AG04450 (cell line): ENCODE measurements at regions of chr2 and their contacts with region 1.

Region 1: GRCh38 chr2:120312861-120313694 is 32.9 kb upstream of the INHBB start:
- DNase-seq: peak; percentile 49
- H3K4me3 ChIP-seq: peak overlapping the region; percentile 63
- H3K27ac ChIP-seq: peak overlapping the region; percentile 68
- H3K27me3 ChIP-seq: peaks cover 2% of the 10 kb centered on the region
- CTCF ChIP-seq: peak; percentile 98

Region 2: DNA sequence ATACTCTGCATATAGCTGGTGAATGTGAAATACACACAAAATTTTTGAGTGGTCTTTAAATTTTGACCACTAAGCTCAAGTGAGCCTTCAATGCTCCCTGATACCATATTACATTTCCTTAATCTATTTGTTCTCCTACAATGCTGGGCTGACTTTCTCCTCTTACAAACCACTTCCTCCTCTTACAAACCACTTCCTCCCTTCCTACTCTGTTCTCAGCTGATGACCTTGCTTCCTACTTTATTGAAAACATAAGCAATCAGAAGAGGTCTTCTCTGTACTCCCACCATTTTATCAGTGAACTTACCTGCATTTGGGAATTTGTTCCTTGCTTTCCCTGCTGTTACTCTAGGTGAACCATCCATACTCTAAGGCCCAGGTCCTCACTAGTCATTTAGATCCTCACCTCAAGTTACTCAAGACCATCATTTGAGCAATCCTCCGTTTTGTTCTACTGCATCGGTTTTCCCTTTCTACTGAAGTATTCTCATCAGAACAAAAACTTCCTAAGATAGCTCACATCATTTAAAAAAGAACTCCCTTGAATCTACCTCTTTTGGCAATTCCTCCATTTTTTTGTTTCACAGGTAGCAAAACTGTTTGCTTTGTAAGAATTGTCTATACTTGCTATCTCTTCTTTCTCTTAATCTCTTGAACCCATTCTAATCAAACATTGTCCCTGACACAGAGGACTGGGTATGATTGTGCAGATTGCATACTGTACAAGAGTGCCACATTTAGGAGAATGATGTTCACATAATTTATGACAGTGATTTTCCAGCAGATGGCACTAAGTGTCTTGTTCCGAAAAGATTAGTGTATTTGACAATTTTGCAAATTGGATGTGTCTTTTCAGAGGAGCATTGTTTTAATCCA is 203.7 kb before region 1 on chr2:
- CTCF ChIA-PET with region 1: interaction called, 29 read pairs
- POLR2A ChIA-PET with region 1: no interaction called
- DNase-seq: no peak
- H3K4me3 ChIP-seq: no peak overlapping the region
- H3K27ac ChIP-seq: no peak overlapping the region
- H3K27me3 ChIP-seq: no peaks in the 10 kb centered on the region
- CTCF ChIP-seq: peak; percentile 38

Region 3: DNA sequence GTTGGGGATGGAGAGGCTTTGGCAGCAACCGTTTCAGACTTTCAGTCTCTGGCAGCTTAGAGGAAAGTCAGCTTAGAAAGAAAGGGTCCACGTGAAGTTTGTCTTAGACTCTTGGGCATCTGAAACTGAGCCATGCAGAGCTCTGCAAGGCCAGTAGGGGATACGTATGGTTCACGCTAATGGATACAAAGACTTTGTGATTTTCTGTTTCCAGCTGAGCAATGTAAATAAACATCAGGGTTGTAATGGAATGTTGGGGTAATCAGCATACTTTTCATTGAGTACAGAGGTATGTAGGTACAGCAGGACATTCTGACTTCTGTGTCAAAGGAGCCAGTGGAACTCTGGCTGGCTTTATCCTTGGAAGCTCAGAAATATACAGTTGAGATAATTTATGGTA is 29.4 kb before region 1 on chr2:
- CTCF ChIA-PET with region 1: interaction called, 39 read pairs
- POLR2A ChIA-PET with region 1: interaction called, 3 read pairs
- DNase-seq: peak; percentile 26
- H3K4me3 ChIP-seq: no peak overlapping the region
- H3K27ac ChIP-seq: no peak overlapping the region
- H3K27me3 ChIP-seq: no peaks in the 10 kb centered on the region
- CTCF ChIP-seq: peak; percentile 75

Region 4: GRCh38 chr2:120323214-120323613 is 10.1 kb after region 1 on chr2:
- CTCF ChIA-PET with region 1: interaction called, 18 read pairs
- POLR2A ChIA-PET with region 1: no interaction called
- DNase-seq: no peak
- H3K4me3 ChIP-seq: no peak overlapping the region
- H3K27ac ChIP-seq: no peak overlapping the region
- H3K27me3 ChIP-seq: peaks cover 46% of the 10 kb centered on the region
- CTCF ChIP-seq: no peak

Region 5: GRCh38 chr2:120686511-120687168 is 373.6 kb after region 1 on chr2:
- CTCF ChIA-PET with region 1: interaction called, 48 read pairs
- POLR2A ChIA-PET with region 1: no interaction called
- DNase-seq: no peak
- H3K4me3 ChIP-seq: no peak overlapping the region
- H3K27ac ChIP-seq: no peak overlapping the region
- H3K27me3 ChIP-seq: peaks cover 15% of the 10 kb centered on the region
- CTCF ChIP-seq: peak; percentile 38